ENCODE measurements at regions of chr5 and their contacts with region 1.

Region 1: DNA sequence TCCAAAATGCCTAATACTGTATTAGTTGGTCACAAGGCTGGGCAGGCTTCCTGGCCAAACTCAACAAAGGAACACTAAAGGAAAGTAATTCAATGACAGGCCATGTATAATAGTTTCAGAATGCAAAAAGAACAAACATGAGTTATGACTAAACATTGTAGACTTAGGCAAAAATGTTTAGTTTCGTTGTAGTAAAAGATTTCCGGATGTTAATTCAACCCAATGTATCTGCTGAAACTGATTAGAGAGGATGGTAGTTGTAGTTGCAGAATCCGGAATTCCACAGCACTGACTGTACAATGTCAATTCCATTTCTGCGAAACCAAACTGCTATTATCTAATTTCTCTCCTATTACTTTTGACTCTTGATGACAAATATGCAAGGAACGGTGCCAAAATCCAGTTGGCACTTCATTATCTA is 117.9 kb upstream of the FST start:
- DNase-seq: peak; percentile 97
- ATAC-seq: peak; percentile 57
- H3K4me3 ChIP-seq: no peak overlapping the region
- H3K27ac ChIP-seq: peak overlapping the region; percentile 100
- H3K4me1 ChIP-seq: peaks cover 85% of the 10 kb centered on the region
- H3K27me3 ChIP-seq: no peaks in the 10 kb centered on the region
- CTCF ChIP-seq: no peak

Region 2: DNA sequence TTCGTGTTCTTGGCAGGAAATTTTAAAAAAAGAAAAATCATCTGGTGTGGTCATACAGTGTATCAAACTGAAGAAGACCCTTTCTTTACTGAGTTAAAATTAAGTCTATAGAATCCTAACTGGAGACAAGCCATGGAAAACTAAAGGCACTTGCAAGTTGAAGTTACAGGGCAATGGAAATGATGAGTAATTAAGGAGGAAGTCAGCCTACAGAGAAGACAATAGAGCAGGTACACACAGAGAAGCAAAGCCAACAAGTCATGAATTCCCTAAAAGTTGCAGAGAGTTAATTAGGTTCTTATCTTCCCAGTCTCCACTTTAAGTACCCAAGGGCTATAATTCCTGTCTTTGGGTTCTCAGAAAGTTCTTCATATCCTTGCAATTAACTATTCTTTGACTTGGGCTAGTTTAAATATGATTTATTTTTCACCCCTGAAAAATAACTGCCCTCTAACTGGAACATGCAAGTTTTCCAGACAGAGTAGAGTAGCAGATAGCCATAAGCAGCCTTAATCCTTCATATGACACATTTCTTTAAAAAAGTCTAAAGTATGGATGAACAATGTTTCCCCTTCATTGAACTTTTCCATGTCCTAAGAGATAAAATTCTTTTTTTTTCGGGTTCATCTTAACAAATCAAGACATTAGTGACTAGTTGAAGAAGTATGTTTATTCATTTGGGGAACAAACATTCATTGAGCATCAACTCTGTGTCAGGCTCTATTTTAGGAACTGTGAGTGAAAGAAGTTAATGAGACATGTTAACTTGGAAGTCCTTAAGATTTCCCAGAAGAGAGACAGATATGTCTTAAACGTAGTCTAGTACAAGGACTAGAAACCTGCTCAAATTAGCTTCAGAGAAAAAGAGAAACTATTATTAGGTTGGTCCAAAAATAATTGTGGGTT is 378.5 kb before region 1 on chr5:
- CTCF ChIA-PET with region 1: no interaction called
- POLR2A ChIA-PET with region 1: interaction called, 16 read pairs
- intact Hi-C with region 1: no loop called
- DNase-seq: peak; percentile 52
- ATAC-seq: peak; percentile 10; the same call in 1 of the 2 replicates
- H3K4me3 ChIP-seq: no peak overlapping the region
- H3K27ac ChIP-seq: peak overlapping the region; percentile 92
- H3K4me1 ChIP-seq: peaks cover 47% of the 10 kb centered on the region
- H3K27me3 ChIP-seq: no peaks in the 10 kb centered on the region
- CTCF ChIP-seq: no peak

Region 3: DNA sequence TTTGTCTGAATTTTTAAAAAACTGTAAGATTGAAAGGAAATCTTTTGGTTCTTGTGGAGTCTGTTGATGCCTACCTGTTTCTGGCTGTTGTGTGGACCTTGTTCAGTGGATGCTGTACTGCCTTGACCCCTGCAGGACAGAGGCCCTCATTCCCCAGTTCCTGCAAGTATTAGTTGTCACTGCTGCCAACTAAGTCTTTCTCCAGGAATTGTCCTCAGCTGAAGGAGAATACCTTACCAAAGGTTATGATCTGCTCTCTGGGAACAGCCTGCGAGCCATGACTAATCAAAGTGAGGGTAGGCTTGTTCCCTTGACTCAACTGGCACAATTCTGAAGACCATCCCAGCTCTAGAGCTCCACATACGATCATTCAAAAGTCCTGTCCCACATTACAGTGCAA is 27.4 kb before region 1 on chr5:
- CTCF ChIA-PET with region 1: interaction called, 3 read pairs
- POLR2A ChIA-PET with region 1: interaction called, 4 read pairs
- intact Hi-C with region 1: loop called (anchors 1 kb)
- DNase-seq: peak; percentile 48
- ATAC-seq: peak; percentile 7; the same call in 1 of the 2 replicates
- H3K4me3 ChIP-seq: no peak overlapping the region
- H3K27ac ChIP-seq: peak overlapping the region; percentile 100
- H3K4me1 ChIP-seq: peaks cover 63% of the 10 kb centered on the region
- H3K27me3 ChIP-seq: no peaks in the 10 kb centered on the region
- CTCF ChIP-seq: peak; percentile 47; the same call in 1 of the 2 replicates

Region 4: GRCh38 chr5:53406630-53407316 is 44.2 kb after region 1 on chr5:
- CTCF ChIA-PET with region 1: no interaction called
- POLR2A ChIA-PET with region 1: no interaction called
- intact Hi-C with region 1: loop called (anchors 1 kb)
- DNase-seq: peak; percentile 87
- ATAC-seq: peak; percentile 93
- H3K4me3 ChIP-seq: no peak overlapping the region
- H3K27ac ChIP-seq: peak overlapping the region; percentile 98
- H3K4me1 ChIP-seq: peaks cover 19% of the 10 kb centered on the region
- H3K27me3 ChIP-seq: no peaks in the 10 kb centered on the region
- CTCF ChIP-seq: no peak

Region 5: GRCh38 chr5:53425598-53426511 is 63.3 kb after region 1 on chr5:
- CTCF ChIA-PET with region 1: no interaction called
- POLR2A ChIA-PET with region 1: no interaction called
- intact Hi-C with region 1: loop called (anchors 2 kb)
- DNase-seq: peak; percentile 46
- ATAC-seq: no peak
- H3K4me3 ChIP-seq: no peak overlapping the region
- H3K27ac ChIP-seq: peak overlapping the region; percentile 100
- H3K4me1 ChIP-seq: peaks cover 73% of the 10 kb centered on the region
- H3K27me3 ChIP-seq: no peaks in the 10 kb centered on the region
- CTCF ChIP-seq: peak; percentile 53

Region 6: GRCh38 chr5:53508125-53508524 is 145.6 kb after region 1 on chr5:
- CTCF ChIA-PET with region 1: no interaction called
- POLR2A ChIA-PET with region 1: no interaction called
- intact Hi-C with region 1: no loop called
- DNase-seq: no peak
- ATAC-seq: no peak
- H3K4me3 ChIP-seq: no peak overlapping the region
- H3K27ac ChIP-seq: no peak overlapping the region
- H3K4me1 ChIP-seq: no peaks in the 10 kb centered on the region
- H3K27me3 ChIP-seq: no peaks in the 10 kb centered on the region
- CTCF ChIP-seq: no peak

Measured in PC-3 (cell line).